Psoas muscle (tissue), 8 donors: ENCODE measurements at regions of chr1 and their contacts with region 1.

Region 1: DNA sequence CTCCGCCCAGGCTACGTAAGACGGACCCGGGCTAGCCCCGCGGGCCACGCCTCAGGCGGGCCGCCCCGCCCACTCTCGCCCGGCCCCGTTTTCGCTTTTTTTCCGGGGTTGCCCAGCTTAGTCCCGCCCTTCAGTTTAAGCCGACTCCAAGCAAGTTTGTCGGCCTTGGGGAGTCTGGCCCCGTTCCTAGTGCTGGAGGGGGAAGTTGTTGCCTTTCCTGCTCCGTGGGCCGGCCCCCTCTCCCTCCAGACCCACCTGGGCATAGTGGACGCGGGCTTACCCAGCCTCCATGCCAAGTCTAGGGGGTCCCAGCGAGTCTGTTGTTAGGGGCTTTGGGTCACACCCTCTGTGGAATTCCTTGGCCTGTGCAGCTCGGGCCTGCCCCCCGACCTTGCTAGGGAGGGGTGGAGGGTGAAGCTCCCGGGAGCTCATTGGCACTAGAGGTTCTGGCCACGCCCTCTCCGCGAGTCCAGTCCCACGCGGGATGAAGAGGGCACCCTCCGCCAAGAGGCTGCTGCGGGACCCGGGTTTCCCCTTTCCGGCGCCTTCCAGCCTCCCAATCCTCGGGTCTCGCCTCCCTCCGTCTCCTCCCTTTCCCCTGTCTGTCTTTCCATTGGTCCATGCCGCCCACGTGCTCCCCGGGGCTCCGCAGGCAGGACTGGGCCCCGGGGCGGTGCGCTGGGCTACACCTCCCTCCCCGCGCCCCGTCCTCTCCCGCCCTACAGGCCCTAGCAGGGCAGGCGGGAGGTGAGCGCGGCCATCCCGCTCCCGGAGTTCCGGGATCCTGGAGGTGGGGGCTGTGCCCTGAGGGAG is 3.3 kb downstream of the RUSC1 start:
- DNase-seq: peak; percentile 94 to 96
- ATAC-seq: peak; percentile 89 to 90 (median 90)
- H3K4me3 ChIP-seq: peak overlapping the region; percentile 96
- H3K27ac ChIP-seq: peak overlapping the region; percentile 82
- H3K4me1 ChIP-seq: peaks cover 24% of the 10 kb centered on the region
- H3K27me3 ChIP-seq: no peaks in the 10 kb centered on the region
- CTCF ChIP-seq: no peak

Region 2: DNA sequence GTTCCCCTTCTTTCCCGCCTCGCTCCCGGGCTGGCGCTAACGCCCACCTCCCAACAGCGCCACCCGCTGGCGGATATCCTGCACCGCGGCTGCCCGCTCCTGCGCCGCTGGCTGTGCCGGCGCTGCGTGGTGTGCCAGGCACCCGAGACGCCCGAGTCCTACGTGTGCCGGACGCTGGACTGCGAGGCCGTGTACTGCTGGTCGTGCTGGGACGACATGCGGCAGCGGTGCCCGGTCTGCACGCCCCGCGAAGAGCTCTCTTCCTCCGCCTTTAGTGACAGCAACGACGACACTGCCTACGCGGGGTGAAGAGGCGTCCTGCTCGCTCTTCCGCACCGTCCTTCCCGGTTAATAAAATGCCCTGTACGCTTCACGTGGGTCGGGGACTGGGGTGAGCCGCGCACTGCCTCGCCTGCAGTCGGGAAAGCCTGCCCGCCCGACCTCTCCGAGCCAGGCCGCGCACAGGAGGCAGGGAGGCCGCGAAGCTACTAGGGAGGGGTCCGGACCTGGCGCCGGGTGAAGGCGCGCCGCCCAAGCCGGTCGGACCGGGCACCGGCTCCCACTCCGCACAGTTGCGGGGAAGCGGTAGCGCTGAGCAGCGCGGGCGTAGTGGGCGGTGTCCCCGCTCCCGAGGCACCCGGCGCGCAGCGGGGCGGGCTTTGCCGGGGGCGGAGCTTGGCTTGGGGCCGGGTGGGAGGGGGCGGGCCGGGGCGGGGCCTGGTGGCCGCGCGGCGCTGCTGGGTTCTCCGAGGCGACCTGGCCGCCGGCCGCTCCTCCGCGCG is 273.3 kb before region 1 on chr1 and contains the start of gene ADAM15:
- intact Hi-C with region 1: no loop called
- DNase-seq: peak; percentile 88 to 93
- ATAC-seq: peak; percentile 87 to 89 (median 88)
- H3K4me3 ChIP-seq: peak within 1 kb of the TSS; percentile 88
- H3K27ac ChIP-seq: peak within 1 kb of the TSS; percentile 86
- H3K4me1 ChIP-seq: peaks cover 23% of the 10 kb centered on the region
- H3K27me3 ChIP-seq: no peaks in the 10 kb centered on the region
- CTCF ChIP-seq: peak; percentile 93
- total RNA-seq, gene ADAM15: 38.4 to 50.9 (median 49.3) TPM

Region 3: GRCh38 chr1:155250633-155251449 is 73.2 kb before region 1 on chr1:
- intact Hi-C with region 1: loop called (anchors 2 to 5 kb)
- DNase-seq: peak; percentile 93 to 96
- ATAC-seq: peak; percentile 84 to 91 (median 88)
- H3K4me3 ChIP-seq: peak overlapping the region; percentile 40
- H3K27ac ChIP-seq: no peak overlapping the region
- H3K4me1 ChIP-seq: peaks cover 14% of the 10 kb centered on the region
- H3K27me3 ChIP-seq: no peaks in the 10 kb centered on the region
- CTCF ChIP-seq: peak; percentile 99

Region 4: DNA sequence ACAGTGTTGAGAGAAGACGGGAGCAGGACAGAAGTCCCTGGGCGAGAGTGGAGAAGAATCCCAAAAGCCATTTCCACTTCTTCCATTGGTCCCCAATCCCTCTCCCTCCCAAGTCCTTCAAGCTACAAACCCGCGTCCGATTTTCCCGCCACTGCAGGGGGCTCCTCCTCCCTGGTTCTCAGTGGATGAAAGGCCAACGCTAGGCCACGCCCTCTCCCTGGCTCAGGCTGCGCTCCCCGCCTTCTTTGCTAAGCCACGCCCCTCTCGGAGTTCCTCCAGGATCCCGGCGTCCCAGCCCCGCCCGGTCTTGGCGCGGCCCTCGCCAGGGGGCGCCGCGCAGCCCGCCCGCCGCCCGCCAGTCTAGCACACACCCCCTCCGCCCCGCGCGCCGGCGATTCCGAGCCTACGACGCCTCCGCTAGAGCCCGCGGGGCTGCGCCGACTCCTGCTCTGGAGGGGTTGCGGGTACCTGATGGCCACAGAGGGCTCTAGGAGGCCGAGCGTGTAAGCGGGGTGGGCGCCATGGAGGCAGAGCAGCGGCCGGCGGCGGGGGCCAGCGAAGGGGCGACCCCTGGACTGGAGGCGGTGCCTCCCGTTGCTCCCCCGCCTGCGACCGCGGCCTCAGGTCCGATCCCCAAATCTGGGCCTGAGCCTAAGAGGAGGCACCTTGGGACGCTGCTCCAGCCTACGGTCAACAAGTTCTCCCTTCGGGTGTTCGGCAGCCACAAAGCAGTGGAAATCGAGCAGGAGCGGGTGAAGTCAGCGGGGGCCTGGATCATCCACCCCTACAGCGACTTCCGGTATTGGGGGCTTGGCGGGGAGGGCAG is 46.7 kb before region 1 on chr1 and contains the start of gene HCN3:
- intact Hi-C with region 1: loop called (anchors 2 to 5 kb)
- DNase-seq: peak; percentile 97 to 99
- ATAC-seq: peak; percentile 85 to 91 (median 90)
- H3K4me3 ChIP-seq: peak within 1 kb of the TSS; percentile 86
- H3K27ac ChIP-seq: peak within 1 kb of the TSS; percentile 39
- H3K4me1 ChIP-seq: peaks cover 19% of the 10 kb centered on the region
- H3K27me3 ChIP-seq: no peaks in the 10 kb centered on the region
- CTCF ChIP-seq: peak; percentile 64
- total RNA-seq, gene HCN3: 0.27 to 0.82 (median 0.32) TPM in 3 of 4 donors, not detected in the other

Region 5: DNA sequence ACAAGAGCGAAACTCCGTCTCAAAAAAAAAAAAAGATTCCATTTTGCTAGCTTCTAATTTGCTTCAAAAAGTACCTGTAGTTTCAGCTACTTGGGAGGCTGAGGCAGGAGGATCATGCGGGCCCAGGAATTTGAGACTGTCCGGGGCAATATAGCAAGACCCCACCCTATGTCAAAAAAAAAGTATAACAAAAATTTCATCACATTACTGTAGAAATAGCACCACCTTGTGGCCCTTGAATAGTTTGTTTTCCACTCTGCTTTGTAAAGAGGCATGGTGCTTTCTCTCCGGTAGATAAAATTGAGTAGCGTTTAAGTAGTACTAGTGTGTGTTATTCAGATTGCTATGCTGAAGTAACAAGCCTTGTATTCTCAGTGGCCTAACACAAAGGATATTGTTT is 267.8 kb after region 1 on chr1:
- intact Hi-C with region 1: loop called in 1 of 2 experiments (anchors 10 kb)
- DNase-seq: no peak
- ATAC-seq: peak; percentile 37 to 81 (median 71)
- H3K4me3 ChIP-seq: no peak overlapping the region
- H3K27ac ChIP-seq: no peak overlapping the region
- H3K4me1 ChIP-seq: no peaks in the 10 kb centered on the region
- H3K27me3 ChIP-seq: no peaks in the 10 kb centered on the region
- CTCF ChIP-seq: peak; percentile 62

Region 6: GRCh38 chr1:156618853-156619581 is 1295.0 kb after region 1 on chr1 and contains the start of gene HAPLN2:
- intact Hi-C with region 1: no loop called
- DNase-seq: no peak
- ATAC-seq: peak in 1 of 4 donors; percentile 21
- H3K4me3 ChIP-seq: no peak within 1 kb of the TSS
- H3K27ac ChIP-seq: no peak within 1 kb of the TSS
- H3K4me1 ChIP-seq: peaks cover 3% of the 10 kb centered on the region
- H3K27me3 ChIP-seq: peaks cover 0 to 50% (median 11%) of the 10 kb centered on the region in 3 donors
- CTCF ChIP-seq: peak; percentile 13
- total RNA-seq, gene HAPLN2: 0.28 to 2.2 (median 0.58) TPM